SK-N-SH (cell line): ENCODE measurements at regions of chr16 and their contacts with region 1.

Region 1: DNA sequence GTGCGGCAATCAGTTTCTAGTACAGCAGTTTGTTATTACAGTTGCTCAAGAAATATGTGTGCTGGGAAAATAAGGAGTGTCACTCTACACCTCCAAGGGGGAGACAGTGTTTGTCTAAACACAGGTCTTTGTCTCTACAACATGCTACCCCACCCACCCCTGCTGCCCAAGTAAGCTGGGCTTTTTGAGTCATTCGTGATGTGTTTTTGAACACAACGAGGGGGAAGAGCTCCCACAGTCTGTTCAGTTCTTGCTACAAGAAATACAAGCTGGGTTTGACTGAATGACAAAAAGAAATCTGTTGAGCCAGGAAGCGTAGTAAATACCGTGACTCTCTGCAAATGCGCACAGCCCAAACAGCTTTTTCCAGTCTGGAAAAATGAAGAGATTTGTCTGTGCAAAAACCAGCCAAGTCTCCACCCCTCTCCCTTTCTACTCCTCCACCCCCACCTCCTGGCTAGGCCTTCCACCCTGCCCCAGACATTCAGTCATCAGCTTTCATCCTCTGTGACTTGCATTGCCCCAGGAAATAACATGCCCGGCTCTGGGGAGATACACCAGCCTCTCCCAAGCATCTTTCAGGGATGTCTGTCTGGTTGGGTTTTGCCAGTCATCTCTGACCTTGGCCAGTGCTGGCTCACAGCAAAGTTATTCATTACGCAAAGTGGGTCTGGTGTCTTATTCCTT is 25.7 kb downstream of the CHD9 start:
- DNase-seq: peak; percentile 78
- H3K4me3 ChIP-seq: peak overlapping the region; percentile 9 to 50; a peak in 3 of 4 replicates
- H3K27ac ChIP-seq: peak overlapping the region; percentile 91 to 96
- H3K4me1 ChIP-seq: peaks cover 54 to 58% of the 10 kb centered on the region in 2 experiments
- H3K27me3 ChIP-seq: no peaks in the 10 kb centered on the region
- CTCF ChIP-seq: no peak
- EP300 ChIP-seq: peak; percentile 44 to 88; a peak in 3 of 4 replicates
- RAD21 ChIP-seq: peak; percentile 47

Region 2: DNA sequence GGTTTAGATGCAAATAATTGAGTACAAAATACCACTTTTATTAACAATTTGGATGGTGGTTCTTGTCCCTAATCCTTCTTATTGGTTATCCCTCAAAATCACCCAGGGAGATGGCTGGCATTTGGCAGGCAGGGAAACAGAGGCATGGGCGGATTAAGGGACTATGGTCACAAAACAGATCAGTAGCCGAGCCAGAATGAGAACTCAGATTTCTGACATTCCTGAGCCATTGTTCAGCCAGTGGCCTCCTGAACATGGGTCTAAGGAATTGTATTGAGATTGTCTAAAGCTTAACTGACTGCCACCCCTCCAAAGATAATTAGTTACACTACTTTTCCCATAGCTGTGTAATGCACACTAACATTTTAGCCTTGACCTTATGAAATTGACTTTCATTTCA is 116.2 kb before region 1 on chr16:
- CTCF ChIA-PET with region 1: no interaction called
- POLR2A ChIA-PET with region 1: no interaction called
- DNase-seq: no peak
- H3K4me3 ChIP-seq: no peak overlapping the region
- H3K27ac ChIP-seq: no peak overlapping the region
- H3K4me1 ChIP-seq: no peaks in the 10 kb centered on the region
- H3K27me3 ChIP-seq: no peaks in the 10 kb centered on the region
- CTCF ChIP-seq: no peak
- EP300 ChIP-seq: no peak
- RAD21 ChIP-seq: no peak

Region 3: DNA sequence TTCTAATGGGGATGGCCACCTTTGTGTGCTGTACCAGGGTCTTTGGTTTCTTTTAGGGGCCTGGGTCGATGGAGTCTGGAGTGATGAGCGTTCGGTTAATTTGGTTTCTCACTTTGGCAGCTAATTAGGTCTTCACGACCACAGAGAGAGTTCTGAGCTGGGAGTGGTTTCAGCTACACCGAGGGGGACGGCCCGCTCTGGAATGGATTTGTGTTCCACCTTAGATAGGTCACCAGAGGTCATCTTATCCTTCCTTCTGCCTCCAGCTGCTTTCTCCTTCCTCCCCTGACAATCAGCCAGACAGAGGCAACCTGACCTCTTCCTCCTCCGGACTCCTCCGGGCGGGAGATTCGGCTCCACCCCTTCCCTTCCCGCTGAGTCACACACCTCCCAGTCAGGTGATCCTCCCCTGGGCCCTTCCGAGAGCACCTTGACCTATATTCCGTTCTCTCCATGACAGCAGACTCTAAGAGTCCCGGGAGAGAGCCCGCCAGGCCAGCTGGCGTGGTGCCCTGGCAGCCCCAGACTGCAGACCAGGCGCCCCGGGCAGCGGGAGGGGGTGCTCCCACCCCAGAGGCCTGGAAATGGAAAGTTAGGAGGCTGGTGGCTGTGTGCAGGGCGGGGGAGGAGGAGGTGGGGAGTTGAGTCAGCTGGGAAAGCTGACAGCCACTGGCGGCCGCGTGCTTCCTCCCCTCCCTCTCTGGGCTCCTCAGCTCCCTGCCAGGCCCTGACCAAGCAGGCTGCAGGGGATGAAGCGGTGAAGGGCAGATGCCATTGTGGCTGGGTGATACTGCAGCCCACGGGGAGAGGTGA is 19.0 kb after region 1 on chr16:
- CTCF ChIA-PET with region 1: interaction called, 14 read pairs
- POLR2A ChIA-PET with region 1: interaction called, 58 read pairs
- DNase-seq: peak; percentile 89
- H3K4me3 ChIP-seq: peak overlapping the region; percentile 36 to 61
- H3K27ac ChIP-seq: peak overlapping the region; percentile 99
- H3K4me1 ChIP-seq: peaks cover 17 to 25% of the 10 kb centered on the region in 2 experiments
- H3K27me3 ChIP-seq: no peaks in the 10 kb centered on the region
- CTCF ChIP-seq: no peak
- EP300 ChIP-seq: peak; percentile 76 to 84
- RAD21 ChIP-seq: peak; percentile 27; the same call in 1 of the 2 replicates

Region 4: DNA sequence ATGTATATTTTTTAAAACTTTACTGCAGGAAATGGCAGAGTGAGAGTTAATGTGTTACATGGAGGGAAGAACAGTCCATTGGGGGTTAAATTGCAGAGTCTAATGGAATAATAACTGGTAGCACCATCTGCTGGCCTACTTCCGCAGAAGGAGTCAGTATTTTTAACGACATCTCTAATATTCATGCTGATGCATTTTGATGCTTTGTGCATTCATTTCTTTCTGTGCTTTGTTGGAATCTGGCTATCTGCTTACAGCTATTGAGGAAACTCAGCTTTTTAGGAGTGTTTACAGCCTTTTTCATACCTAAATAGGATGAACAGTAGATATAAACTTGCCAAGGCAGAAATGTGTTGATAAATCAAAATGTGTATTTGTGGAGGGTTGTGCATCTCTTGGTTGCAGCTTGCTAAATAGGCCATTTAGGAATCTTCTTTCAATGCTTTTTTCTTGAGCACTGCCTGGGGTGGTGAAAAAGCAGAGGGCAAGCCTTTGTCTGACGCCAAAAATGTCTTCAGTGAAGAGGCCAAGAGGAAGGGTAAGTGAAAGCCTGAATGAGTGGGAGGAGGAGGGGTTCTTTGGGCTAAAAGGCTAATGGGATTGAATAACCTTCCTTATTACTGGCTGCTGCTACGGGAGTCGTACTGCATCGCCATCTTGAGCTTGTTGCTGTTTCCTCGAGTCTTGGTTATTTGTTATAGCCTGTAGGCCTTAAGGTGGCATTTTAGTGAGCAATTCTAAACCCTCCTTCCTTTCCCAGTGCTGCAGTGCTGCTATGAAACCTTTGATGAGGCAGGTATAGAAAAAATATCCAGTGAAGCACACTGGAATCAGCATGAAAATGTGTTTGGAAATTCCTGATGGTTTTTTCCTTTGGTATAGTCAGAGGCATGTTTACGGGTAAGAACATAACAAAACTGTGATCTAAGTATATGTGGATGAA is 127.6 kb after region 1 on chr16:
- CTCF ChIA-PET with region 1: interaction called, 12 read pairs
- POLR2A ChIA-PET with region 1: no interaction called
- DNase-seq: peak; percentile 77
- H3K4me3 ChIP-seq: peak overlapping the region; percentile 52 to 69
- H3K27ac ChIP-seq: peak overlapping the region; percentile 93 to 97
- H3K4me1 ChIP-seq: peaks cover 7 to 17% of the 10 kb centered on the region in 2 experiments; a peak in 2 of 4 replicates
- H3K27me3 ChIP-seq: no peaks in the 10 kb centered on the region
- CTCF ChIP-seq: peak; percentile 73
- EP300 ChIP-seq: peak in 1 of 2 experiments; percentile 25; a peak in 1 of 4 replicates
- RAD21 ChIP-seq: peak; percentile 75

Region 5: DNA sequence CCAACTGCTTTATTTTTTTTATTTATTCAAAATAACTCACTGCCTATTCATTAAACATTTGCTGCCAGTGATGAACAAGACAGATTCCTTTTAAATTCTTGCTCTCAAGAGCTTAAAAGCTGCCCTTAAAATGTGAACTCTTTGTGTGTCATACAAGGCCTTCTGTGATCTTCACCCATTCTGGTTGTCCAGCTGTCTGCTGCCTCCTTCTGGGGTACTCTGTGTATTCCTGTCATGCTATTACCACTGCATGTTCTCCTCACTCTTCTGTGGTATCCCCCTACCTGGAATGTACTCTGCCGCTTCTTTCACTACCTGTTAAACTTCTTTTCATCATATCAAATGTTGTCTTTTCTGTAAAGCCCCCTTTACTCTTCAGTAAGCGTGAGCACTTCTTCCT is 140.1 kb after region 1 on chr16:
- CTCF ChIA-PET with region 1: no interaction called
- POLR2A ChIA-PET with region 1: no interaction called
- DNase-seq: peak; percentile 7
- H3K4me3 ChIP-seq: no peak overlapping the region
- H3K27ac ChIP-seq: peak overlapping the region in 1 of 2 experiments; percentile 38; a peak in 1 of 4 replicates
- H3K4me1 ChIP-seq: peaks cover 0 to 27% of the 10 kb centered on the region in 2 experiments; a peak in 3 of 4 replicates
- H3K27me3 ChIP-seq: no peaks in the 10 kb centered on the region
- CTCF ChIP-seq: peak; percentile 28; the same call in 1 of the 2 replicates
- EP300 ChIP-seq: no peak
- RAD21 ChIP-seq: peak; percentile 49